ENCODE measurements at regions of chr10 and their contacts with region 1.

Region 1: DNA sequence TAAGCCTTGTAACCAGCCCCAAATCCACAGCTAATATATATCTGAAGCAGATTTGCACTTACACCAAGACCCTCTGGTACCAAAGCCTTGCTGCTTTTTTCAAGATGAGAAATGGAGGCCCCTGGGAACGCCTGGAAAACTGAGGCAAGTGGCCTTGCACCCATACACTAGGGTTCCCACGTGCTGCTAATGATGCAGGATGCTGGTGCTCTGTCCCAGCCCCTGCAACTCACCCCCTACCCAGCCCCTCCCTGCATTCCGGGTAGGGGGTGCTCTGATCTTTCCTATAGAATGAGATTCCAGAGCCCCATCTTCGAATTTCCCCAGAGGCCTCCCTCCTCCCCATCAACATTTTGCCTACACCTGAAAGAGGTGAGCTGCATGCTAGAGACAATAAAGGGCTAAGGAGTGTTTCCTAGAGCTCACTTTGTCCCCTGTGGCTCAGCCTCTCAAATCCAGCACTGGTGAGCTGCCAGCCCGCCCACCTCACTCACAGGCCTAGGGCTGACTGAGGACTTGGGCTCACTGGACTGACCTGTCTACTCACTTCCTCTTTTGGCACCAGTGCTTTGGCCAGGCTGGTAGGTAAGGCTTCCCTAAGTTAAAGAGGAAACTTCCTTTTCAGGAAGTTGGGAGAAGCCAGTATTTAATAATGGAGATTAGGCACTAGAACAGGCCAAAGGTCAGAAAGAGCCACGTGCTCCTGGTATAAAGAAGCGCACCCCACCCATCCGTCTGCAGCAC is 9.8 kb downstream of the RBP4 start:
- DNase-seq: no peak
- ATAC-seq: peak; percentile 3; the same call in 1 of the 3 replicates
- H3K4me3 ChIP-seq: no peak overlapping the region
- H3K27ac ChIP-seq: no peak overlapping the region
- H3K4me1 ChIP-seq: peaks cover 34% of the 10 kb centered on the region
- H3K27me3 ChIP-seq: no peaks in the 10 kb centered on the region
- CTCF ChIP-seq: no peak
- EP300 ChIP-seq: no peak
- POLR2A ChIP-seq: peak; percentile 15 to 55
- RAD21 ChIP-seq: no peak

Region 2: GRCh38 chr10:93541402-93542357 is 49.6 kb before region 1 on chr10:
- CTCF ChIA-PET with region 1: no interaction called
- POLR2A ChIA-PET with region 1: interaction called, 3 read pairs
- in situ Hi-C with region 1: no loop called
- intact Hi-C with region 1: loop called (anchors 10 kb)
- DNase-seq: peak; percentile 13
- ATAC-seq: peak; percentile 99
- H3K4me3 ChIP-seq: peak overlapping the region in 1 of 3 experiments; percentile 37; a peak in 1 of 6 replicates
- H3K27ac ChIP-seq: no peak overlapping the region
- H3K4me1 ChIP-seq: peaks cover 16% of the 10 kb centered on the region
- H3K27me3 ChIP-seq: no peaks in the 10 kb centered on the region; a peak in 1 of 5 replicates
- CTCF ChIP-seq: peak; percentile 84
- EP300 ChIP-seq: no peak
- POLR2A ChIP-seq: no peak
- RAD21 ChIP-seq: peak; percentile 52; the same call in 1 of the 2 replicates

Region 3: DNA sequence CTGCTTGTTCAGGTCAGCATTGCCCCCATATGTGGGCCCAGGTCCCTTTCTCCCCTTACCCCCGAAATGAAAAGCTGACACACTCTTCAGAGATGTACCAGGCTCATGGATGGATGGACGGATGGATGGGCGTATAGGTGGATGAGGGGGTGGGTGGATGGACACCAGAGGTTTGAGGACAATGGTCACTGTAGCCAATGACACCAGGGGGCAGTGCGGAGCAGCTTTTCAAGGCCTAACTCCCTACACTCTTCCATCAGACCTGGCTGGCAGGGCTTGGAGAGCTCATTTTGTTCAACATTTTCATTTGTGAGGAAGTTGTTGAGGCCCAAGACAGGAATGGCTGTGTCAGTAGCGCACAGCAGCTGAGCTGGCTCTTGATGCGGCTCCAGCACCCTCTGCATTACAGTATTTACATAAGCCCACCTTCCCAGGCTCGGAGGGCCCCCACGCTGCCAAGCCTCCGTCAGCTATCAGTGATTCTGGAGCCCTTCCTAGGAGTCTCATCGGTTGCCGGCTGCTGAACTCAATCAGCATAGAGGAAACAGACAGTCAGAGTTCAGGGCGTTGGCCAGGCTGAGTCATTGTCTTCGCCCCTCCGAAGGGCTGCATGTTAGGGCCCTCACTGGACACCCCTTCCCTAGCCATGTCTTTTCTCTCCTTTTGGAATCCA is 36.3 kb before region 1 on chr10:
- CTCF ChIA-PET with region 1: no interaction called
- POLR2A ChIA-PET with region 1: interaction called, 11 read pairs
- in situ Hi-C with region 1: no loop called
- intact Hi-C with region 1: no loop called
- DNase-seq: peak; percentile 68
- ATAC-seq: peak; percentile 95
- H3K4me3 ChIP-seq: no peak overlapping the region; a peak in 1 of 6 replicates
- H3K27ac ChIP-seq: no peak overlapping the region
- H3K4me1 ChIP-seq: peaks cover 37% of the 10 kb centered on the region
- H3K27me3 ChIP-seq: peaks cover 0 to 4% of the 10 kb centered on the region in 2 experiments; a peak in 1 of 5 replicates
- CTCF ChIP-seq: peak; percentile 88
- EP300 ChIP-seq: no peak
- POLR2A ChIP-seq: no peak
- RAD21 ChIP-seq: peak; percentile 77

Measured in HepG2 (cell line).